Heart left ventricle (tissue), 16 donors: ENCODE measurements at regions of chr15 and their contacts with region 1.

Region 1: GRCh38 chr15:73873889-73874511 is 636 bp downstream of the TBC1D21 start:
- DNase-seq: no peak
- ATAC-seq: no peak
- H3K4me3 ChIP-seq: no peak overlapping the region
- H3K27ac ChIP-seq: no peak overlapping the region
- H3K4me1 ChIP-seq: peaks cover 0 to 21% (median 8%) of the 10 kb centered on the region in 12 donors
- H3K27me3 ChIP-seq: peaks cover 0 to 8% (median 0%) of the 10 kb centered on the region in 9 donors
- CTCF ChIP-seq: peak; percentile 59 to 73 (median 70)
- POLR2A ChIP-seq: no peak

Region 2: GRCh38 chr15:73746883-73747282 is 127.1 kb before region 1 on chr15:
- intact Hi-C with region 1: loop called in 2 of 10 experiments (anchors 5 to 10 kb)
- DNase-seq: peak in 1 of 5 donors; percentile 26
- ATAC-seq: peak in 2 of 4 donors; percentile 6 to 26
- H3K4me3 ChIP-seq: no peak overlapping the region
- H3K27ac ChIP-seq: peak overlapping the region in 1 of 12 donors; percentile 22
- H3K4me1 ChIP-seq: peaks cover 0 to 34% (median 16%) of the 10 kb centered on the region in 12 donors
- H3K27me3 ChIP-seq: peaks cover 0 to 15% (median 1%) of the 10 kb centered on the region in 9 donors
- CTCF ChIP-seq: no peak
- POLR2A ChIP-seq: no peak

Region 3: DNA sequence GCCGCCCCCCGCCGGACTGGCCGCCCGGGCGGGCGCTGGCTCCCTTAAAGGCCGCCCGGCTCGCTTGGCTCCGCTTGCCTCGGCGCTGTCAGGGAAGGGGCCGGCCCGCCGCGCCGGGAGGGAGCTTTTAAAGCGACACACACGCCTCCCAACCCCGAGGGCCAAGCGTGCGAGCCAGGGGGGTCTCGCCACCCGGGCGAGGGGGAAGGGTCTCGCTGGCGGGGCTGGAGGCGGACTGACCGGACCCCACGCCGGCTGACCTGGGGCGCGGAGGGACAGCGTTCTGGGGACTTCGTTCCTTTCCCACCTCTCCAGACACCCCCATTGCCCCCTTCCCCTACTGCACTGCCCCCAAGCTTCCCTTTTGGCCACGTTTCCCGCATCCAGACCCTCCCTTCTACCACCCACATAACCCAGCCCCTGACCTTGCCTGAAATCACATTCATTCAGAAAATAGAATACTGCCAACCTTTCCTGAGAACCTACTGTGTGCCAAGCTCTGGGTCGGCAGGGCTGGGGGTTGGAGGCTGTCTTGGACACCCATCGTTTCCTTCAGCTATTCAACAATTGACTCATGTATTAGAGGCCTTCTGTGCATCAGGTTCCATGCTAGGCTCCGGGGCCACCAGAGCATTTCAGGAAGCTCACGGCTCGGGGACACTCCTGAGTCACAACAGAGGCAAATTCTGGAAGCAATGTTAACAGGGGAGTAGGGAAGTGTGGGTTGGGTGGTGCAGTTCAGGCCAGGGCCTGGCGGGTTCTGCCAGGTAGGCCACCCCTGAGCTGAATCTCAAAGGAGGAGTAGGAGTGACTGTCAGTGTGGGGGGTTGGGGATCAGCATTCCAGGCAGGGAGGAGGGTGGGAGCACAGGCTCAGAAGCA is 120.5 kb before region 1 on chr15 and contains the start of gene INSYN1:
- intact Hi-C with region 1: loop called in 2 of 10 experiments (anchors 5 to 10 kb)
- DNase-seq: peak; percentile 65 to 79 (median 68)
- ATAC-seq: peak in 3 of 4 donors; percentile 73 to 79 (median 75)
- H3K4me3 ChIP-seq: peak within 1 kb of the TSS; percentile 57 to 92 (median 70)
- H3K27ac ChIP-seq: peak within 1 kb of the TSS in 10 of 12 donors; percentile 40 to 80 (median 56)
- H3K4me1 ChIP-seq: peaks cover 0 to 40% (median 10%) of the 10 kb centered on the region in 12 donors
- H3K27me3 ChIP-seq: peaks cover 0 to 43% (median 7%) of the 10 kb centered on the region in 9 donors
- CTCF ChIP-seq: no peak
- POLR2A ChIP-seq: no peak
- total RNA-seq, gene INSYN1: 51.5 to 182 (median 83.0) TPM

Region 4: GRCh38 chr15:73800662-73801345 is 73.2 kb before region 1 on chr15:
- intact Hi-C with region 1: loop called in 1 of 10 experiments (anchors 5 kb)
- DNase-seq: peak; percentile 77 to 91 (median 83)
- ATAC-seq: peak; percentile 72 to 88 (median 84)
- H3K4me3 ChIP-seq: no peak overlapping the region
- H3K27ac ChIP-seq: peak overlapping the region; percentile 40 to 87 (median 78)
- H3K4me1 ChIP-seq: peaks cover 12 to 67% (median 37%) of the 10 kb centered on the region in 12 donors
- H3K27me3 ChIP-seq: no peaks in the 10 kb centered on the region
- CTCF ChIP-seq: no peak
- POLR2A ChIP-seq: no peak

Region 5: DNA sequence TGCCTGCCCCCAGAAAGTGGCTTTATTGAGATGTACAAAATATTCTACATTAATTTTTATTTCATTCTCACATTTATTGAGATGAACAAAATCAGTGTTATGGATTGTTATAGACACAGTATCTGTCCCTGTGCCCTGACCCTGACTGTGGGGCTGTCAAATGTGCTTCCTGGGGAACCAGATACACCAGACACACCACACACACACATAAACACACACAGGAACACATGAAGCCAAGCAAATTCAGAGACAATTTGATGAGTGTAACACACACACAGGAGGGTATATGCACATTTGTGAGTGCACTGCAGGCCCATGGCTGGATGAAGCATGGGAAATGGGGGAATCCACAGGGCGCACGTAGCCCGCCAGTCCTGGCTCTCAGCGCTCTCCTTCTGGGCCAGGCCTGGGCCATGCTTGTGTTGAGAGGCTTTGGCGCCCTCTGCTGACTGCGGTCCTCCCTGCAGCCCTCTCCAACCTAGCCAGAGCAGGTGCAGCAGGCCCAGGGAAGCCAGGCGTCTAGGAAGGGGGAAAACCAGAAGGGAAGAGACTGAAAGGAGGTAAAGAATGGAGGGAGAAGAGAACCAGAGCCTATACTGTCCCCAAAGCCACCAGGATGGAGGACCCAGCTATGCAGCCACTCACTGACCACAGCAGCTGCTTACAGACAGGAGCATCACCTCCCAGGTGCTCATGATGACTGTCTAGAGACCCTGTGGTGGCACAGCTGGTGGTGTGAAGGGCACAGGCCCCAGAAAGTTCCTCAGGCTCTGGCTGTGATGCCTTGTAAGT is 34.2 kb after region 1 on chr15:
- intact Hi-C with region 1: loop called in 9 of 10 experiments (anchors 1 to 5 kb)
- DNase-seq: peak; percentile 76 to 89 (median 87)
- ATAC-seq: peak; percentile 91 to 97 (median 96)
- H3K4me3 ChIP-seq: no peak overlapping the region
- H3K27ac ChIP-seq: no peak overlapping the region
- H3K4me1 ChIP-seq: peaks cover 0 to 17% (median 5%) of the 10 kb centered on the region in 12 donors
- H3K27me3 ChIP-seq: no peaks in the 10 kb centered on the region
- CTCF ChIP-seq: peak; percentile 82 to 95 (median 91)
- POLR2A ChIP-seq: no peak

Region 6: DNA sequence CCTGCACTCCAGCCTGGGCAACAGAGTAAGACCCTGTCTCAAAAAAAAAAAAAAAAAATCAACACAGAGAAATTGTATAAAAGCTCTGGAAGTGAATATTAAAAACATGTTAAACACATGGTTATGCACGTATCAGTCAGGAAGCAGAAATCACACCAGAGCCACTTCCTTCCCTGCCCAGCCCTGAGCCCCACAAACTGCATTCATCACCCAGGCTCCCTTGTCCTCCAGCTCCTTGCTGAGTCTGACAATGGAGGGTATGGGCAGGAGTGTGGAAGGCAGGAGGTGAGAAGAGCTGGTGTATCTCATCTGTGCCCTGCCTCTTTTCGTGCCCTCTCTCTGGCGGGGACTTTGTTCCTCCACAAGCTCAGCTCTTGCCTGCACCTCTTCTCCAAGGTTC is 40.1 kb after region 1 on chr15:
- intact Hi-C with region 1: loop called in 6 of 10 experiments (anchors 2 to 5 kb)
- DNase-seq: no peak
- ATAC-seq: peak in 1 of 4 donors; percentile 28
- H3K4me3 ChIP-seq: no peak overlapping the region
- H3K27ac ChIP-seq: no peak overlapping the region
- H3K4me1 ChIP-seq: peaks cover 0 to 9% (median 0%) of the 10 kb centered on the region in 12 donors
- H3K27me3 ChIP-seq: no peaks in the 10 kb centered on the region
- CTCF ChIP-seq: no peak
- POLR2A ChIP-seq: no peak

Region 7: GRCh38 chr15:73964736-73965093 is 90.7 kb after region 1 on chr15:
- intact Hi-C with region 1: loop called in 5 of 10 experiments (anchors 2 to 10 kb)
- DNase-seq: peak; percentile 75 to 90 (median 79)
- ATAC-seq: peak; percentile 81 to 94 (median 93)
- H3K4me3 ChIP-seq: peak overlapping the region in 1 of 12 donors; percentile 38
- H3K27ac ChIP-seq: peak overlapping the region in 1 of 12 donors; percentile 42
- H3K4me1 ChIP-seq: peaks cover 0 to 18% (median 3%) of the 10 kb centered on the region in 12 donors
- H3K27me3 ChIP-seq: no peaks in the 10 kb centered on the region
- CTCF ChIP-seq: peak; percentile 88 to 97 (median 94)
- POLR2A ChIP-seq: no peak